Activated T-helper 1 cell treated with anti-CD3 and anti-CD28 coated beads, Interleukin-12 subunit alpha, Interleukin-12 subunit beta, Interleukin-2, Interleukin-4 antibody, amounts not matched to agents 30 ng/mL and 10 ng/mL and 1 ng/mL, durations not matched to agents 14 hours and 24 hours and 36 hours (primary cell): ENCODE measurements at regions of chr9 and their contacts with region 1.

Region 1: GRCh38 chr9:117153021-117153420 is 261.8 kb downstream of the ASTN2 start:
- DNase-seq: no peak
- H3K4me3 Mint-ChIP-seq: no peak overlapping the region
- H3K27ac Mint-ChIP-seq: no peak overlapping the region
- H3K4me1 Mint-ChIP-seq: no peaks in the 10 kb centered on the region
- H3K27me3 Mint-ChIP-seq: no peaks in the 10 kb centered on the region

Region 2: DNA sequence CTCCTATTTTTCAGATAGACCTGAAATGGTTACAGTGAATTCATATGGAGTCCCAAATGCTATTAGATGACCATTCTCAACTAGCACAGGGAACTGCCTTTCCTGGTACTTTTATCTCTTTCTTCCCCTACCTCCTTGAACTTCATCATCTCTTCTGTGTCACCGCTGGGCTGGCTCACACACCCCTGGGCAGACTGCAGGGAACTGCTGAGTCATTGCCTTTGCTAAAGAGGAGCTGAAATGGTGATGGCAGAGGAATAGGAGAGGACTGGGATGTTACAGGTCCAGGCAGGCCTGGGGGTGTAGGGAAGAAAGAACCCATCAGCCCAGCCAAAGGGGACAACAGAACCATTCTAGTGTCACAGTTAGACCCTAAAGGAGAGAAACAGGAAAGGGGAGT is 60.4 kb before region 1 on chr9:
- intact Hi-C with region 1: loop called (anchors 10 kb)
- DNase-seq: no peak
- H3K4me3 Mint-ChIP-seq: no peak overlapping the region
- H3K27ac Mint-ChIP-seq: no peak overlapping the region
- H3K4me1 Mint-ChIP-seq: no peaks in the 10 kb centered on the region
- H3K27me3 Mint-ChIP-seq: no peaks in the 10 kb centered on the region